ENCODE measurements at regions of chr3 and their contacts with region 1.

Region 1: DNA sequence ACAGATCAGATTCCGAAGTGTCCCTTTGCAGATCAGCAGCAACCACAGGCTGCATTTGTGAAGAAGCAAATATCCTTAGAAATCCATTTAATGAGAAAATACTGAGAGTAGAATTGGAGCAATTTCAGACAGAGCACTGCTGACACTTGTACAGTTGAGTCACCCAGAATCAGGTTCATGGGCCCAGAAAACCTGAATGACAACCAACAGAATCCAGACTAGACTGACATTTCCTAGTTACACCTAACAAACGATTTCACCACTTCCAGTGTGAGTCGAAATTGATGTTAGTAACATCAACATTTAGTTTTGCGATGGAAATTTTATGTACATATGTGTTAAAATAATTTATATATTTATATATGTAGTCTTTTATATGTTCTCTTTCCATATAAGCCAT is 16.8 kb downstream of the GABRR3 start:
- DNase-seq: no peak
- H3K4me3 ChIP-seq: no peak overlapping the region
- H3K27ac ChIP-seq: no peak overlapping the region
- H3K4me1 ChIP-seq: no peaks in the 10 kb centered on the region
- H3K27me3 ChIP-seq: no peaks in the 10 kb centered on the region
- CTCF ChIP-seq: no peak
- POLR2A ChIP-seq: no peak

Region 2: GRCh38 chr3:97111244-97111643 is 907.1 kb before region 1 on chr3:
- intact Hi-C with region 1: no loop called
- DNase-seq: no peak
- H3K4me3 ChIP-seq: no peak overlapping the region
- H3K27ac ChIP-seq: no peak overlapping the region
- H3K4me1 ChIP-seq: no peaks in the 10 kb centered on the region
- H3K27me3 ChIP-seq: no peaks in the 10 kb centered on the region
- CTCF ChIP-seq: no peak
- POLR2A ChIP-seq: no peak

Region 3: GRCh38 chr3:97795956-97796355 is 222.3 kb before region 1 on chr3:
- intact Hi-C with region 1: loop called (anchors 5 kb)
- DNase-seq: no peak
- H3K4me3 ChIP-seq: no peak overlapping the region
- H3K27ac ChIP-seq: no peak overlapping the region
- H3K4me1 ChIP-seq: no peaks in the 10 kb centered on the region
- H3K27me3 ChIP-seq: no peaks in the 10 kb centered on the region
- CTCF ChIP-seq: no peak
- POLR2A ChIP-seq: no peak

Region 4: DNA sequence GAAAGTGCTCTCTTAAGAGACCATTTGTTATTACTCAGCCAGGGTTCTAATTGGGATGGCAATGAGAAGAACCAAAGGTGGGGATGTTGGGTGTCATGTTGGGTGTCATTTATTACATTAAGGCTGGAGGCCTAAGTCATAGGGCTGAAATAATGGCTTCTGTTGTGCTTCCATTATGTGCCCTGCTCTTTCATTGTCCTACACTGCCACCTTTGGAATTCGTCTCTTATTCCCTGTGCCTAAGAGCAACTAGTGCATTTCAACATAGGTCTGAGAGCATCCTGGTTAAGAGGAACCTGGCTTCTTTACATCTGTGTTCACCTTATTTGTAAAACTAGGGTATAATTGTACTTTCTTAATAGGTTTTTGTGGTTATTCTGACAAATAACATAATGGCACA is 78.3 kb before region 1 on chr3:
- intact Hi-C with region 1: no loop called
- DNase-seq: no peak
- H3K4me3 ChIP-seq: no peak overlapping the region
- H3K27ac ChIP-seq: no peak overlapping the region
- H3K4me1 ChIP-seq: no peaks in the 10 kb centered on the region
- H3K27me3 ChIP-seq: no peaks in the 10 kb centered on the region
- CTCF ChIP-seq: no peak
- POLR2A ChIP-seq: no peak

Measured in testis (tissue), 5 donors.